ENCODE measurements at regions of chr4 and their contacts with region 1.

Region 1: GRCh38 chr4:47562297-47562696 is 77.2 kb downstream of the ATP10D start:
- DNase-seq: no peak
- H3K4me3 Mint-ChIP-seq: no peak overlapping the region
- H3K27ac Mint-ChIP-seq: no peak overlapping the region
- H3K4me1 Mint-ChIP-seq: peaks cover 10% of the 10 kb centered on the region
- H3K27me3 Mint-ChIP-seq: no peaks in the 10 kb centered on the region

Region 2: DNA sequence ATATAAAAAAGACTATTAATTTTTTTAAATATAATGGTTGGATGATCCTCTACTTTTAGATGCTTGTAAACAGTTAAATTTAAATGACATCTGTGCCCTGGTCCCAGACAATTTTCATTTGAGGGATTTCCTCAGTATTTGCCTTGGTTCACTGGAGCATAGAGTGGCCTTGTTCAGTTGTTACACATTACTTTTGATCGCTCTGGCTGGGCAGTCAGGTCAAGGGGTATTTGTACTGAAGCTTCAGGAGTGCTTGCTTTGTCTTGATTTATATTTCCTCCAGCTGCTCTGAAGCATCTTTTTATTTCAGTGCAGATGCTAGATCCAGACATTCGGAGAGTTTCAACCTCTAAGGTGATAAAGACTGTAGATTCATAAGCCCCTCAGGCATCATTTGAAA is 148.8 kb before region 1 on chr4:
- CTCF ChIA-PET with region 1: no interaction called
- POLR2A ChIA-PET with region 1: no interaction called
- DNase-seq: no peak
- H3K4me3 Mint-ChIP-seq: no peak overlapping the region
- H3K27ac Mint-ChIP-seq: no peak overlapping the region
- H3K4me1 Mint-ChIP-seq: no peaks in the 10 kb centered on the region
- H3K27me3 Mint-ChIP-seq: peaks cover 6% of the 10 kb centered on the region

Region 3: GRCh38 chr4:47485047-47485692 is 77.1 kb before region 1 on chr4 and contains the start of gene ATP10D:
- CTCF ChIA-PET with region 1: interaction called, 22 read pairs
- POLR2A ChIA-PET with region 1: no interaction called
- DNase-seq: peak; percentile 81
- H3K4me3 Mint-ChIP-seq: peak within 1 kb of the TSS; percentile 86
- H3K27ac Mint-ChIP-seq: peak within 1 kb of the TSS; percentile 61
- H3K4me1 Mint-ChIP-seq: peaks cover 29% of the 10 kb centered on the region
- H3K27me3 Mint-ChIP-seq: peaks cover 1% of the 10 kb centered on the region
- total RNA-seq, gene ATP10D: 7.4 to 8.1 TPM

Region 4: GRCh38 chr4:47510506-47511143 is 51.7 kb before region 1 on chr4:
- CTCF ChIA-PET with region 1: interaction called, 15 read pairs
- POLR2A ChIA-PET with region 1: no interaction called
- DNase-seq: no peak
- H3K4me3 Mint-ChIP-seq: no peak overlapping the region
- H3K27ac Mint-ChIP-seq: no peak overlapping the region
- H3K4me1 Mint-ChIP-seq: peaks cover 7% of the 10 kb centered on the region
- H3K27me3 Mint-ChIP-seq: peaks cover 6% of the 10 kb centered on the region

Region 5: GRCh38 chr4:47598320-47598719 is 36.0 kb after region 1 on chr4:
- CTCF ChIA-PET with region 1: no interaction called
- POLR2A ChIA-PET with region 1: no interaction called
- DNase-seq: no peak
- H3K4me3 Mint-ChIP-seq: no peak overlapping the region
- H3K27ac Mint-ChIP-seq: no peak overlapping the region
- H3K4me1 Mint-ChIP-seq: no peaks in the 10 kb centered on the region
- H3K27me3 Mint-ChIP-seq: no peaks in the 10 kb centered on the region

Region 6: GRCh38 chr4:47642985-47643760 is 80.9 kb after region 1 on chr4:
- CTCF ChIA-PET with region 1: no interaction called
- POLR2A ChIA-PET with region 1: no interaction called
- DNase-seq: no peak
- H3K4me3 Mint-ChIP-seq: no peak overlapping the region
- H3K27ac Mint-ChIP-seq: no peak overlapping the region
- H3K4me1 Mint-ChIP-seq: no peaks in the 10 kb centered on the region
- H3K27me3 Mint-ChIP-seq: peaks cover 4% of the 10 kb centered on the region

Region 7: GRCh38 chr4:47704693-47705325 is 142.5 kb after region 1 on chr4:
- CTCF ChIA-PET with region 1: no interaction called
- POLR2A ChIA-PET with region 1: no interaction called
- DNase-seq: no peak
- H3K4me3 Mint-ChIP-seq: no peak overlapping the region
- H3K27ac Mint-ChIP-seq: no peak overlapping the region
- H3K4me1 Mint-ChIP-seq: no peaks in the 10 kb centered on the region
- H3K27me3 Mint-ChIP-seq: peaks cover 21% of the 10 kb centered on the region